ENCODE measurements at regions of chr19 and their contacts with region 1.

Region 1: DNA sequence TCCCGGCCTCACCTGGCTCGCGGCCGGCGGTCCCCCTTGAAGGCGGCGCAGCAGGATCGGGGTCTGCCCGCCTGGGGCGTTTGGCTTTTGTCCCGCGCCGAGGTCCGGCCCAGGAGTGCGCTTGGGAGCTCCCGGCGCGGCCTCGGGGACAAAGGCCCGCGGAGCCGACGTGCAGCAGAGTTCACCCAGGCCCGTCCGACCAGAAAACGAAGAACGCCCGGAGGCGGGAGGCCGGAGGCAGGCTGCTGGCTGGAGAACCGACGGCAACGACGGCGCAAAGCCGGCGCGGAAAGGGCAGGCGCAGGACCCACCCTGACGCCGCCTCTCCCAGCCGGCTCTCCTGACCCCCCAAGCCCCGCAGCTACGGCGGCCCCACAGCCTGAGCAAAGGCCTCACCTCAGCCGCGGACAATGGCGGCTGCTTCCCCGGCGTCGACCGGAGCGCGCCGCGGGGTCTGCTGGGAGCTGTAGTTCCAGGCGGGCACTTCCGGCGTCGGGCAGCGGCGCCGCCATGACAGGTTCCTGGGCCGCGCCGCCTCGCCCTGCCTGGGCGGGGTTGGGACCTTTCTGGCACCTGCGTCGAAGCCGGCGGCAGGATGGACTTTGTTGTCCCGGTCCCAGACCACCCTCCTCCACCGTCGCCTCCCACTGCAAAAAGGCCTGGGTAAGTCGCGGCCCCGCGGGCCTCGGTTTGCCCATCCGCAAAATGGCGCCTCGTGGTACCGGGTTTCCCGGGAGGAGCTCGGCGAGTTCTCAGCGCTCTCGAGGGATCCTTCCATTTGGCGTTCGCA is at the start of gene ZNF606:
- DNase-seq: peak; percentile 78 to 89 (median 84)
- ATAC-seq: peak; percentile 97
- H3K4me3 Mint-ChIP-seq: peak within 1 kb of the TSS; percentile 80 to 91 (median 86)
- H3K27ac Mint-ChIP-seq: peak within 1 kb of the TSS; percentile 87 to 95 (median 94)
- H3K4me1 Mint-ChIP-seq: peaks cover 12 to 35% (median 33%) of the 10 kb centered on the region in 4 donors
- H3K27me3 Mint-ChIP-seq: no peaks in the 10 kb centered on the region
- polyA plus RNA-seq, gene ZNF606: 2.1 to 6.5 (median 6.0) TPM

Region 2: DNA sequence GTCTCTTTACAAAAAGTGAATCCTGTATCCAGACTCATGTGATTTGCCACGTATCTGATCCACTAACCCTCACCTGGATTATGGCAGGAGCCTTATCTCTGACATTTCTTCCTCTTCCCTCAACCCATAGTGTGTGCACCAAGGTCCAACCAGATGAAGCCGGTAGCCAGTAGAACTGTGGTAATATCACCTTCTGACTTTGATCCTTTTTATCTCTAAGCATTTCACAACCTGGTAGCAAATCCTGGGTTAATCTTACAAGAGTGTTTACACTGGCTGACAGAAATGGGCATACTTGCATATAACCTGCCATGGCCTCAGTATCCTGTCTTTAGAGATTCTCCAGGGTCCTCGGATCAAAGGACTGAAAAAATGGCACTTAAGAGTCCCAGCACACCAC is 88.0 kb before region 1 on chr19:
- POLR2A ChIA-PET with region 1: interaction called, 12 read pairs
- DNase-seq: no peak
- ATAC-seq: no peak
- H3K4me3 Mint-ChIP-seq: peak overlapping the region; percentile 45 to 99 (median 97)
- H3K27ac Mint-ChIP-seq: peak overlapping the region in 5 of 10 donors; percentile 6 to 99 (median 54)
- H3K4me1 Mint-ChIP-seq: peaks cover 14 to 41% (median 37%) of the 10 kb centered on the region in 4 donors
- H3K27me3 Mint-ChIP-seq: no peaks in the 10 kb centered on the region

Region 3: GRCh38 chr19:57934820-57935665 is 67.5 kb before region 1 on chr19 and contains the start of gene ZNF418:
- POLR2A ChIA-PET with region 1: interaction called, 11 read pairs
- DNase-seq: peak in 8 of 10 donors; percentile 10 to 83 (median 26)
- ATAC-seq: peak; percentile 81 to 97
- H3K4me3 Mint-ChIP-seq: peak within 1 kb of the TSS; percentile 25 to 96 (median 84)
- H3K27ac Mint-ChIP-seq: peak within 1 kb of the TSS in 8 of 10 donors; percentile 43 to 95 (median 78)
- H3K4me1 Mint-ChIP-seq: peaks cover 4 to 11% (median 9%) of the 10 kb centered on the region in 4 donors
- H3K27me3 Mint-ChIP-seq: peaks cover 0 to 11% (median 0%) of the 10 kb centered on the region in 5 donors
- polyA plus RNA-seq, gene ZNF418: 1.0 to 2.1 TPM in 2 of 3 donors, not detected in the other

Region 4: DNA sequence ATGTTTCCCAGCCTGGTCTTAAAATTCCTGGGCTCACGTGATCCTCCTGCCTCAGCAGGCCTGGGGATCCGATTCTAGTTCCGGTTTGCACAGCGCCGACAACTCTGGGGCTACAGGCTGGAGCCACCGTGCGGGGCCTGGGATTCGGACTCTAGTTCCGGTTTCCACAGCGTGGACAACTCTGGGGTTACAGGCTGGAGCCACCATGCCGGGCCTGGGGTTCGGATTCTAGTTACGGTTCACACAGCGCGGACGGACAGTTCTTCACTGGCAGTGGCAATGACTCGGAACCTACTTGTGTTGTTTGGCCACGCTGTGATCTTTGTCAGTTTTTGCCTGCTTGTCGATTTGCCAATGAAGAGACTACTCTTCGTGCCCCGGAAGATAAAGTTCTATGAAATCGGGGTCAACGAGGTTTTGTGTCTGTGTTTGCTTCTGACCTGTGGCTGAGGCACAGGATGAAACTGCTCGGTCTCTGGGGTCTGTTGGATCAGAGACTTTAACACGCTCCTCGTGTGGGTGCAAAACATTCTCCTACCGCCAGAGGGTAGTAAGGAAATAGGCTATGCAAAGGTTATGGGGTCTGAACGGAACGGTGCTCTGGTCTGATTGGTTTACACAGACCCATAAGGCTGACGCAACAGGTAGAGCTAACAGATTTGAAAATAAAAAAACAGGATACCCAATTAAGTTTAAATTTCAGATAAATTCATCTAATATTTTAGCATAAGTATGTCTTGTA is 19.1 kb after region 1 on chr19:
- POLR2A ChIA-PET with region 1: no interaction called
- DNase-seq: peak in 8 of 10 donors; percentile 18 to 90 (median 54)
- ATAC-seq: peak; percentile 97 to 100
- H3K4me3 Mint-ChIP-seq: no peak overlapping the region
- H3K27ac Mint-ChIP-seq: peak overlapping the region in 2 of 10 donors; percentile 58 to 68
- H3K4me1 Mint-ChIP-seq: peaks cover 0 to 3% (median under 1%) of the 10 kb centered on the region in 4 donors
- H3K27me3 Mint-ChIP-seq: peaks cover 0 to 7% (median 4%) of the 10 kb centered on the region in 5 donors

Region 5: GRCh38 chr19:58059003-58059670 is 56.6 kb after region 1 on chr19 and contains the start of gene ZNF135:
- POLR2A ChIA-PET with region 1: interaction called, 25 read pairs
- DNase-seq: peak; percentile 42 to 91 (median 72)
- ATAC-seq: peak; percentile 94 to 95
- H3K4me3 Mint-ChIP-seq: peak within 1 kb of the TSS; percentile 77 to 91 (median 86)
- H3K27ac Mint-ChIP-seq: peak within 1 kb of the TSS; percentile 60 to 97 (median 90)
- H3K4me1 Mint-ChIP-seq: peaks cover 6 to 12% (median 8%) of the 10 kb centered on the region in 4 donors
- H3K27me3 Mint-ChIP-seq: peaks cover 5 to 28% (median 17%) of the 10 kb centered on the region in 5 donors
- polyA plus RNA-seq, gene ZNF135: 0.79 to 4.3 (median 3.8) TPM

Region 6: GRCh38 chr19:58097781-58098681 is 95.5 kb after region 1 on chr19 and contains the start of gene ZSCAN18:
- POLR2A ChIA-PET with region 1: interaction called, 10 read pairs
- DNase-seq: peak; percentile 97 to 100 (median 100)
- ATAC-seq: peak; percentile 88 to 90
- H3K4me3 Mint-ChIP-seq: peak within 1 kb of the TSS; percentile 82 to 96 (median 92)
- H3K27ac Mint-ChIP-seq: peak within 1 kb of the TSS; percentile 99 to 100 (median 100)
- H3K4me1 Mint-ChIP-seq: peaks cover 13 to 19% (median 18%) of the 10 kb centered on the region in 4 donors
- H3K27me3 Mint-ChIP-seq: peaks cover 0 to 2% (median 0%) of the 10 kb centered on the region in 5 donors
- polyA plus RNA-seq, gene ZSCAN18: 18.7 to 30.0 (median 27.4) TPM